Naive thymus-derived CD4-positive, alpha-beta T cell (primary cell): ENCODE measurements at regions of chr10 and their contacts with region 1.

Region 1: DNA sequence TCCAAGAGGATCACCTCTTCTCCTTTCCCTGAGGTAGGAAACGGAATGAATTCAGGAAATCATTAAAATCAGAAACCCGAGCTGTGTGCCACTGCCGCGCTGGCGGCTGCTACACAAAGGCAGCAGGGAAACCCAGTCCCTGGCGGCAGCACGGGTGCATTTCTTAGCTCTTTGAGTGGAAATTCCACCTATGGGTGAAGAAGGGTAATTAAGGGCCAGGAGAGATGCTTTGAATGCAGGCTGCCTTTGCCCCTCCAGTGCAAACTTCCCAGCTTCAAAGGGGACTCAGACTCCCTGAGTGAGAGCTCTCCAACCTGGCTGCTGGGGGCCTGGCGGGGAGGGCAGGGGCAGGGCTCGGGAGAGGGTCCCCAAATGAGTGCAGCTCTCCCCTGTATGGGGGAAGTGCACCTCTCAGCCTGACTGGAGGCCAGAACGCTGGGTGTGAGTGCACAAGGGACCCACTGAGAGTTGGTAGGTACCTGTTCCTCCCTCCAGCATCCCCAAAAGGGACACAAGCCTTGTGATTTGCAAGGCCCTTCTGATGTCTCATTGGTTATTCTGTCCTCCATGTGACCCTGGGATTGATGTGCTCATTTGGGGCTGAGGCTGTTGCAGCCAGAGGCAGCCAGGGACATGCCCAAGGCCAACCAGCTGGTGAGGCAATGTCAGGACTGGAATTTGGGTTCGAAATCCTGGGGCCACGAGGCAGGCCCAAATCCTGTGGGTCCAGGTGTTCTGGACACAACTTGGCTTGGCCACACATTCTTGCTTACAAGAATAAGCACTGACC is 16.3 kb upstream of the ZMIZ1 start:
- DNase-seq: peak in 7 of 9 donors; percentile 52 to 76 (median 63)
- ATAC-seq: peak; percentile 75
- H3K4me3 ChIP-seq: no peak overlapping the region
- H3K4me3 Mint-ChIP-seq: peak overlapping the region in 4 of 10 donors; percentile 16 to 48 (median 38)
- H3K27ac ChIP-seq: no peak overlapping the region
- H3K27ac Mint-ChIP-seq: peak overlapping the region in 3 of 9 donors; percentile 30 to 81 (median 53)
- H3K4me1 ChIP-seq: peaks cover 17 to 30% of the 10 kb centered on the region in 2 donors
- H3K4me1 Mint-ChIP-seq: peaks cover 25 to 56% (median 46%) of the 10 kb centered on the region in 7 donors
- H3K27me3 ChIP-seq: no peaks in the 10 kb centered on the region
- H3K27me3 Mint-ChIP-seq: no peaks in the 10 kb centered on the region

Region 2: DNA sequence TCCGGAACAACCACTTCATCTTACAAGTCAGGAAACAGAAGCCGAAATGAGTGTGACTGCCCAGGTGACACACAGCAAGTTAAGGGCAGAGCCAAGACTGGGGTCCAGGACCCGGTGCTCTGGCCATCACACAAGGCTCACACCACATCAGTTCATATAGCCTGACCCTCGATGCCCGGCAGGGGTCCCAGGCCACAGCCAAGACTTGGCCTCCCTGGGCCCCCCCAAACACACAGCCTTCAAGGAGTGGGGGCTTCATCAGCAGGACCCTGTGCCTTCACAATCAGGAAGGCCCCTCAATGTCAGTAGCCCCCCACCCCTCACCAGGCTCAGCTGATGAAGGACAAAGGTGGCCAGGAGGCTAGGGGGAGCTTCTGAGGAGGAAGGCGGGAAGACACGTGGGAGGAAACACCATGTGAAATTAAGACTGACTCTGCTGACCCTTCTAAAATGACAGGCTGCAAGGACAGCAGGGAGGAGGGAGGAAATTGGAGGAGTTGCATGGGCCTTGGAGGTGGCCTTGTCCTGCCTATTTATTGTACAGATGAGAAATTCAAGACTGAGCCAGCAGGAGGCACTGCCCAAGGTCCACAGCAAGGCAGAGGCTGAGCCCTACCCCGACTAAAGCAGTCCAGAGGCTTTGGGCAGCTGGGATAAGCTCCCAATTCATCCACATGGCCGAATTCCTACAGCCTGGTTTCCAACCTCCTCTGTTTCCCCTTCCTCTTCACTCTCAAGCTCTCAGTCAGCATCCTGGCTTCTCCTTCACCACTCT is 199.8 kb before region 1 on chr10:
- CTCF ChIA-PET with region 1: no interaction called
- POLR2A ChIA-PET with region 1: no interaction called
- intact Hi-C with region 1: loop called in 1 of 2 experiments (anchors 2 kb)
- DNase-seq: peak in 5 of 9 donors; percentile 8 to 29 (median 14)
- ATAC-seq: peak; percentile 57
- H3K4me3 ChIP-seq: no peak overlapping the region
- H3K4me3 Mint-ChIP-seq: no peak overlapping the region
- H3K27ac ChIP-seq: no peak overlapping the region
- H3K27ac Mint-ChIP-seq: no peak overlapping the region
- H3K4me1 ChIP-seq: no peaks in the 10 kb centered on the region
- H3K4me1 Mint-ChIP-seq: no peaks in the 10 kb centered on the region
- H3K27me3 ChIP-seq: no peaks in the 10 kb centered on the region
- H3K27me3 Mint-ChIP-seq: no peaks in the 10 kb centered on the region

Region 3: GRCh38 chr10:79023240-79024162 is 29.0 kb before region 1 on chr10:
- CTCF ChIA-PET with region 1: no interaction called
- POLR2A ChIA-PET with region 1: no interaction called
- intact Hi-C with region 1: loop called in 1 of 2 experiments (anchors 2 kb)
- DNase-seq: no peak
- ATAC-seq: no peak
- H3K4me3 ChIP-seq: no peak overlapping the region
- H3K4me3 Mint-ChIP-seq: peak overlapping the region in 3 of 10 donors; percentile 0 to 85 (median 12)
- H3K27ac ChIP-seq: no peak overlapping the region
- H3K27ac Mint-ChIP-seq: peak overlapping the region in 6 of 9 donors; percentile 39 to 76 (median 60)
- H3K4me1 ChIP-seq: peaks cover 29 to 37% of the 10 kb centered on the region in 2 donors
- H3K4me1 Mint-ChIP-seq: peaks cover 19 to 48% (median 36%) of the 10 kb centered on the region in 7 donors
- H3K27me3 ChIP-seq: no peaks in the 10 kb centered on the region
- H3K27me3 Mint-ChIP-seq: peaks cover 0 to 5% (median 0%) of the 10 kb centered on the region in 5 donors